ENCODE measurements at regions of chr1 and their contacts with region 1.

Region 1: GRCh38 chr1:98794196-98794886 is 132.8 kb downstream of the SNX7 start:
- DNase-seq: peak in 3 of 5 donors; percentile 12 to 24 (median 23)
- ATAC-seq: peak in 3 of 4 donors; percentile 73 to 86 (median 78)
- H3K4me3 ChIP-seq: no peak overlapping the region
- H3K27ac ChIP-seq: no peak overlapping the region
- H3K4me1 ChIP-seq: no peaks in the 10 kb centered on the region
- H3K27me3 ChIP-seq: no peaks in the 10 kb centered on the region
- CTCF ChIP-seq: peak; percentile 43 to 80 (median 63)
- POLR2A ChIP-seq: no peak

Region 2: DNA sequence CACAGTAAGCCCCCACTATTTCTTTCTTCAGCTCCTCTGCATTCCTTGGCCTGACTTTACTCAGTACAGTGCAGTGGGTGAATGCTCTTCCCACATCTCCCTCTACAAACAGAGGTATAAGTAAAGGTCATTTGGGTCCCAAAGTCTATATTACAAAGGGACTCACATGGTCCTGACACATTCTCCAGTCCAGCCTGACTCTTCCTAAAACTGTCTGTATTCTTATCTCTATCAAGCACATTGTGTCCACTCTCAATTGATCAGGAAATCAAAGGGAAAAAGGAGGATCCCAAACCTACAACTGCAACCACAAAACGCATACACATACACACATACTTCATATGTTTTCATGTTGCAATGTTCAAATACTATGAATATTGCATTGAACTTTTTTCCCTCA is 922.7 kb after region 1 on chr1:
- intact Hi-C with region 1: loop called in 1 of 10 experiments (anchors 10 kb)
- DNase-seq: no peak
- ATAC-seq: no peak
- H3K4me3 ChIP-seq: no peak overlapping the region
- H3K27ac ChIP-seq: no peak overlapping the region
- H3K4me1 ChIP-seq: no peaks in the 10 kb centered on the region
- H3K27me3 ChIP-seq: no peaks in the 10 kb centered on the region
- CTCF ChIP-seq: no peak
- POLR2A ChIP-seq: no peak

Region 3: GRCh38 chr1:99737016-99737415 is 942.7 kb after region 1 on chr1:
- intact Hi-C with region 1: loop called in 2 of 10 experiments (anchors 10 kb)
- DNase-seq: peak in 2 of 5 donors; percentile 21 to 24
- ATAC-seq: peak; percentile 87 to 95 (median 90)
- H3K4me3 ChIP-seq: no peak overlapping the region
- H3K27ac ChIP-seq: peak overlapping the region in 1 of 12 donors; percentile 8
- H3K4me1 ChIP-seq: peaks cover 0 to 5% (median 0%) of the 10 kb centered on the region in 12 donors
- H3K27me3 ChIP-seq: no peaks in the 10 kb centered on the region
- CTCF ChIP-seq: peak; percentile 35 to 71 (median 56)
- POLR2A ChIP-seq: no peak

Measured in heart left ventricle (tissue), 16 donors.